Activated T-helper 1 cell treated with anti-CD3 and anti-CD28 coated beads, Interleukin-12 subunit alpha, Interleukin-12 subunit beta, Interleukin-2, Interleukin-4 antibody, amounts not matched to agents 30 ng/mL and 10 ng/mL and 1 ng/mL, durations not matched to agents 14 hours and 24 hours and 36 hours (primary cell): ENCODE measurements at regions of chr4 and their contacts with region 1.

Region 1: DNA sequence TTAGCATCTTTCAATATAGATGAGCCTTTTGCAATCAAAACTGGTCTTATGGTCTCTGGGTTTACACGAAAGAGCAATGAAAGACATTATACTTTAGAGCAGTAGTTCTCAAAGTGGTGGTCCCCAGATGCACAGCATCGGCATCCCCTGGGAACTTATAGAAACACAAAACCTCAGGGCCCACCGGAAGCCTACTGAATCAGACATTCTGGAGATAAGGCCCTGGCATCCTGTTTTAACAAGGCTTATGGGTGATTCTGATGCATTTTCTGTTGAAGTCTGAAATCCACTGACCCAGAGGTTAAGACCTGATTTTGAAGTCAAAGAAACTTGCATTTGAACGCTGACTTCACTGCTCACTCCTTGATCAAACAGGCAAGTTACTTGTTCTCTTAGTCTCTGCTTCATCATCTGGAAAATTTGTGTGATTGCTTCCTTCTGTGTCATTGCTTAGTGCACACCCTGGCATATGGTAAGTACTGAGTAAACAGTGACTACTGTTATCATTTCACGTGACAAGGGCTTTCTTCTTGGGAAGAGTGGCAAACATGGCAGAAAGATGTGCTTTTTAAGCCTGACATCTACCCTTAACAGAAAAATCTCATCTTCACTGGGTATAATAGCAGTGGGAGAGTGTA is 14.5 kb downstream of the CHRNA9 start:
- DNase-seq: no peak
- H3K4me3 Mint-ChIP-seq: no peak overlapping the region
- H3K27ac Mint-ChIP-seq: no peak overlapping the region
- H3K4me1 Mint-ChIP-seq: no peaks in the 10 kb centered on the region
- H3K27me3 Mint-ChIP-seq: peaks cover 4% of the 10 kb centered on the region

Region 2: GRCh38 chr4:40395908-40396793 is 46.5 kb after region 1 on chr4:
- intact Hi-C with region 1: no loop called
- DNase-seq: no peak
- H3K4me3 Mint-ChIP-seq: no peak overlapping the region
- H3K27ac Mint-ChIP-seq: no peak overlapping the region
- H3K4me1 Mint-ChIP-seq: no peaks in the 10 kb centered on the region
- H3K27me3 Mint-ChIP-seq: peaks cover 9% of the 10 kb centered on the region

Region 3: GRCh38 chr4:40423735-40424134 is 74.1 kb after region 1 on chr4:
- intact Hi-C with region 1: loop called (anchors 10 kb)
- DNase-seq: no peak
- H3K4me3 Mint-ChIP-seq: no peak overlapping the region
- H3K27ac Mint-ChIP-seq: no peak overlapping the region
- H3K4me1 Mint-ChIP-seq: peaks cover 10% of the 10 kb centered on the region
- H3K27me3 Mint-ChIP-seq: no peaks in the 10 kb centered on the region